AG04449 (cell line): ENCODE measurements at regions of chr3 and their contacts with region 1.

Region 1: DNA sequence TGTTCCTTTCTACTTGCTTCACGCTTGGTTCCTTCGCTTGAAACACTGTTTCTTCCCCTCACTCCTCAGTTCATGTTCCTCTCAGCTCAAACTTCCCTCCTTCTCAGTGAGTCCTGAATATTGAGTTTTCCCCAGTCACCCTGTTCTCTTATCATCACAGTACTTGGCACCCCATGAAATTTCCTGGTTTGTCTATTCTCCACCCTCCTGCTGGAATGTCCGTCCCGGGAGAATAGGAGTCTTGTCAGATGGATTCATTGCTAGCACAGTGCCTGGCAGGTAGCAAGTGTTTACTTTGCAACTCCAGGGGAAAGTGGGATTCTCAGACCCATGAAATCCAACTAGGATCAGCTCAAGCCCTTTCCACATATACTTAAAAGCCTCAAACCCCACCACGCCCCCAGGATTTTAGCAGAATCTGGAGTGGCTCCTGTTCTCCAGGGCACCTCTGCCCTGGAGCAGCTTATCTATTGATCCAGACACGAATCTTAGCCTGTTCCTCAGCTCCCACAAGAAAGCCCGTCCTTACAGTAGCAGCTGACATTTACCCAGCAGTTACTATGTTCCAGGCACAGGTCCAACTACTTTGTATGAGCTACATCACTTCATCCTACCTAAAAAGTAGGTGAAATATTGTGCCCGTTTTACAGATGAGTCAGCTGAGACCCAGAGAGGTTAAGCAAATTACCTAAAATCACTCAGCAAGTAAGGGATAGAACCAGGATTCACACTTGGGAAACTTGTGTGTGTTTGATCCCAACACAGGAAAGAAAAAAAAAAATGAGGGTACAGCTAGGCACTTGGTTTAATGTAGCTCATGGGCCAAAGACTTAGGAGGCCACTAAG is 36.8 kb upstream of the MAP3K13 start:
- DNase-seq: no peak
- H3K4me3 ChIP-seq: no peak overlapping the region
- CTCF ChIP-seq: no peak

Region 2: DNA sequence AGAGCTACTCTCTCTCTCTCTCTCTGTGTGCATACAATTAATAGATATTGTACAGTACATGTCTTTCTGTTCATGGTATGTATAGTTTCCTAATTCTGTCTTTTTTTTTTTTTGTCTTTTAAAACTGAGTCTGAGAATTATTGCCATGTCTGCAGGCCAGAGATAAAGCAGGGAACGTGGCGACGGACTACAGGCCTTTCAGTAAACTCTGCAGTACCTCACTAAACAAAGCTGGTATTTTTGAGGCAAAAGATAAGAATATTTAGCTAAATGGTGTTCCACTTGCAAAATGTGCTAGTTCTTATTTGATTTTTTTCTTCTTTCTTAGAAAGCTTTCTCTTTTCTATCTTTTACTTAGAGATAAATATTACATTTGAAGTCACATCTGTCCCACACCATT is 28.3 kb before region 1 on chr3:
- CTCF ChIA-PET with region 1: no interaction called
- POLR2A ChIA-PET with region 1: no interaction called
- DNase-seq: no peak
- H3K4me3 ChIP-seq: no peak overlapping the region
- CTCF ChIP-seq: no peak

Region 3: GRCh38 chr3:185308126-185308754 is 17.9 kb before region 1 on chr3:
- CTCF ChIA-PET with region 1: interaction called, 26 read pairs
- POLR2A ChIA-PET with region 1: no interaction called
- DNase-seq: no peak
- H3K4me3 ChIP-seq: no peak overlapping the region
- CTCF ChIP-seq: peak; percentile 62

Region 4: DNA sequence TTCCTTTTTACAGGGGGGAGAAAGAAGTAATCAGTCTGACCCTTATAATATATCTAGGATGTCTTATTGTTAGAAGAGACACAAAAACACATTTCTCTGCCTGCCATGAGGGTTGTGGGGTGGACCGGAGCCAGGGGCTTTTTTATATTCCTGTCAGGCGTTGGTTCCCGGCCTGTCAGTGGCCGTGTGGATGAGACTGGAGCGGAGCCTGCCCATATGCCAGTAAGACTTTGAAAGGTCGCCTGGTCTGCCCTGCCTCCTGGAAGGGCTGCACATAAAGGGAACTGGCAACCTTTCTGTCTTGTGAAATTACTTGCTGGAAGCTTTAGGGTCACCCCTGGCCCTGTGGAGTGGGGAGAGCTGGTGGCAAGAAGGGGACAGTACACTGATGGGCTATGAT is 71.5 kb after region 1 on chr3:
- CTCF ChIA-PET with region 1: no interaction called
- POLR2A ChIA-PET with region 1: no interaction called
- DNase-seq: no peak
- H3K4me3 ChIP-seq: no peak overlapping the region
- CTCF ChIP-seq: no peak